Calu3 (cell line): ENCODE measurements at regions of chr1 and their contacts with region 1.

Region 1: DNA sequence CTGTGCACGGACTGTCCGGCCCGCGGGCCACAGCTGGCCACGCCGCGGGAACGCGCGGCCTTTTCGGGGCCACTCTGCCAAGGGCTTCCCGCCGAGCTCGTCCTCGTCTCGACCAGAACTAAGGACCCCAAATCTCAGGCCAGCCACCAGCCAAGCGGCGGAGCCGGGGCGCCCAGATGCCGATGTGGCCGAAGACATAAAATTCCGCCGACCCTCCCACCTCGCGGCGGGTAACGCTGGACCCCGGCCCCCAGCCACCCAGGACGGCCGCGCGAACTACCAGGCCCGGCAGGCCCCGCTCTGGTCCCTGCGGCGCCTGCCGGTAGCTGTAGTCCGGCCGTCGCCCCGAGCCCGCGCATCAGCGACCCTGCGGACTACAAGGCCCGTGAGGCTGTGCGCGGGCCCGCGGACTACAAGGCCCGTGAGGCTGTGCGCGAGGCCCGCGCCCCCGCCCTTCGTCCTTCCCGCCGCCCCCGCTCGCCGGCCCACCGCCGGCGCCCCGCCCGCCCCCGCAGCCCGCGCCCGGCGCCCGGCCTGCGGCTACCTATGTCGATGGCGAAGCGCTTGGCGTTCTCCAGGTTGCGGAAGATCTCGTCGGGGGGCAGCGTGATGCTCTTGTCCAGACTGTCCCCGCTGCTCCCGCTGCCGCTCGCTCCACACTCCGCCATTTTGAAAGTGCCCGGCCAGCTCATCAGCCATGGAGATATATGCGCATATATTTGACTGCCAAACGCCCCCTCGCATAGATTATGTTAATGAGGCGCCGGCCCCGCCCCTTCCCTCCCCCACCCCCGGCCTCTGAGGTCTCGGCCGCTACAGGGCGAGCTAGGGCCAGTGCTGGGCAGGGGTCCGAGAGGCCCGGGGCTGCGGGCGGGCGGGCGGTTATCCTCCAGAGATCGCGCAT is at the start of gene PANK4:
- DNase-seq: peak; percentile 87
- H3K4me3 Mint-ChIP-seq: peak within 1 kb of the TSS; percentile 75
- H3K27ac Mint-ChIP-seq: no peak within 1 kb of the TSS
- H3K4me1 Mint-ChIP-seq: no peaks in the 10 kb centered on the region
- H3K27me3 Mint-ChIP-seq: peaks cover 8% of the 10 kb centered on the region
- CTCF ChIP-seq: no peak
- total RNA-seq, gene PANK4: 24.4 and 24.7 TPM in 2 replicates

Region 2: DNA sequence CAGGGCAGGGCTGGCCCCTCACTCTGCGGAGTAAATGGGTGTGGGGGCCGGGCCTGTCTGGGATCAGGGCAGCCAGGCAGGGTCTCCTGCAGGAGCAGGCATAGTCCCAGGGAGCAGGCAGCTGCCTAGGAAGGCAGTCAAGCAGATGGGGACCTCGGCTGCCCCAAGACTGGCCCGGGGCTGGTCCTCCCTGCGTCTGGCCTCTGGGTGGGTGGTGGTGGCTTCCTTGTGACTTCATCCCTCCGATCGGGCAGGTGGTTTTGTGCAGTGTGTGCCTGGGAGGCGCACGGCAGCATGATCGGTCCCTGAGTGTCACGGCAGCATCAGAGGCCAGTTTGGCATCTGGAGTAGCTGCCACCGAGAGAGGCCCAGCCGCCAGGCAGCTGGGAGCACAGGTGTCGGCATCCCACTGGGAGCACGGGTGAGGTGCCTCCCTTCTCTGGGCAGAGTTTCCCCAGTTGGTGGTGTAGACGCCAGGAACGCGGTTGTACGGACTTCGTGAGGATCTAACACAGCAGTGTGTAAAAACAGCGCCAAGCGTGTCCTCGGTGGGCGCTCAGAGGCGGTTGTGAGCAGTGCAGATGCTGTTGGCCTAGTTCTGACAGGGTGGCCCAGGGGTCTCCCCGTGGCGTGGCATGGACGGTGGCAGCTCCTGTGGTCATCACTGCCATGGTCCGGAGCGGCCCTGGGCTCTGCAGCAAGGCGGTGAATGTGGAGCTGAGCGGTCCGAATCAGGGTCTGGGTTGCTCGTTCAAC is 430.0 kb before region 1 on chr1:
- CTCF ChIA-PET with region 1: interaction called, 10 read pairs
- intact Hi-C with region 1: no loop called
- DNase-seq: no peak
- H3K4me3 Mint-ChIP-seq: no peak overlapping the region
- H3K27ac Mint-ChIP-seq: no peak overlapping the region
- H3K4me1 Mint-ChIP-seq: no peaks in the 10 kb centered on the region
- H3K27me3 Mint-ChIP-seq: no peaks in the 10 kb centered on the region
- CTCF ChIP-seq: no peak

Region 3: DNA sequence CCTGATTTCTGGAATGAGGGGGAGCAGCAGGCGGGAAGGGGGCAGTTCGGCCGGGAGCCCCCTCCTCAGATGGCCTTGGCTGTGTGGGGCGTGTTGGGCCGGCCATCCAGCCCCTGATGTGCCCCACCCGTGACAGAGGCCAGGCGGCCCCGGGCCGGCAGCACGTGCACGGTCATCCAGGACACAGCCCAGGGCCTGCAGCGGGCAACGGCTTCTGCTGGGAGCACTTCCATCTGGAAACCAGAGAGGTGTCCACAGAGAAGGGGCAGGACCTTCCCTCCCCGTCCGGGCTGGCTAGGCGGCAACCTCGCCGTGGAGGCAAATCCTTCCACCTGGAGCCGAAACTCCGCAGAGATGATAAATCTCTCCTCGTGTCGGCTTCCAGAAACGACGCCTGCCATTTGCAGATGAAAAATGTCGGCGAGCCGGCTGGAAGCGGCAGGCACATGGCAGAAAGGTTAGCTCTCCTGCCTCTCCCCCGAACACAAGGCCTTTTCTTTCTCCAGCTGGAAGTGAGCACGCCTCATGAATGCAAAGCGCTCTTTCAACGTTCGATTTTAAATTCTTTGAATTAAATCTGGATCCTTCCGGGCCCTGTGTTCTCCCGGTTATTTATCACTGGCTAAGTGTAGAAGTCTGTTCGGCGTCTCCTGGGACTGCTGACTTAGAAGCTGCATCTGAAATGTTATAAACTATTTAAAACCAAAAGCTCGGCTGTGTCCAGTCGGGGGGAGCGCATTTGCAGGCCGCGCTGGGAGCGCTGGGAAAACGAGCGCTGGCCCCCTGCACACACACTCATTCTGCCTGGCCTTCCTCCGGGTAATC is 485.7 kb after region 1 on chr1:
- CTCF ChIA-PET with region 1: no interaction called
- intact Hi-C with region 1: no loop called
- DNase-seq: no peak
- H3K4me3 Mint-ChIP-seq: no peak overlapping the region
- H3K27ac Mint-ChIP-seq: no peak overlapping the region
- H3K4me1 Mint-ChIP-seq: no peaks in the 10 kb centered on the region
- H3K27me3 Mint-ChIP-seq: peaks cover 56% of the 10 kb centered on the region
- CTCF ChIP-seq: no peak